ENCODE measurements at regions of chr6 and their contacts with region 1.

Region 1: GRCh38 chr6:14210663-14211561 is 93.3 kb downstream of the CD83 start:
- DNase-seq: peak; percentile 98
- CTCF ChIP-seq: peak; percentile 98

Region 2: DNA sequence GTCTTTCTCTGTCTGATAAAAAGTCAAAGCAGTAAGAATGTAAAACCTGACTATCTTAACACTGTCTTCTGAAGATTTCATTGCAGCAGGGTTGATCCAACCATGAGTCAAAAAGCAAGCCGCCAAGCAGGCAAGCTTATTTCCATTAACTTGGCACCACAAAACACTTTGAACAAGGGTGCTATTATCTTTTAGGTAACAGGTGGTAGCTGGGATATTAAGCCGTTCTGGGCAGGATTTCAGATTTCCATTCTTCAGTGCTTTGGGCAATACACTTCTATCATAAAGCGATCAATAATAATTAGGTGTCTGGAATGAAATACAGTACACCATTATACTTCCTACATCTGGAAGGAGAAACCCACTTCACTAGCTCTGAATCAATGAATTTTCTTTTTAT is 1064.5 kb before region 1 on chr6:
- in situ Hi-C with region 1: no loop called
- DNase-seq: no peak
- CTCF ChIP-seq: no peak

Region 3: DNA sequence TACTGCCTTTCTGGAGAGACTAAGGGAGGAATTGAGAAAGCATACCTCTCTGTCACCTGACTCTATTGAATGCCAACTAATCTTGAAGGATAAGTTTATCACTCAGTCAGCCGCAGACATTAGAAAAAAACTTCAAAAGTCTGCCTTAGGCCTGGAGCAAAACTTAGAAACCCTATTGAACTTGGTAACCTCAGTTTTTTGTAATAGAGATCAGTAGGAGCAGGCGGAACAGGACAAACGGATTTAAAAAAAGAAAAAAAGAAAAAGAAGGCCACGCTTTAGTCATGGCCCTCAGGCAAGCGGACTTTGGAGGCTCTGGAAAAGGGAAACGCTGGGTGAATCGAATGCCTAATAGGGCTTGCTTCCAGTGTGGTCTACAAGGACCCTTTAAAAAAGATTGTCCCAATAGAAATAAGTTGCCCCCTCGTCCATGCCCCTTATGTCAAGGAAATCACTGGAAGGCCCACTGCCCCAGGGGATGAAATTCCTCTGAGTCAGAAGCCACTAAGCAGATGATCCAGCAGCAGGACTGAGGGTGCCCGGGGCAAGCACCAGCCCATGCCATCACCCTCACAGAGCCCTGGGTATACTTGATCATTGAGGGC is 329.2 kb before region 1 on chr6:
- in situ Hi-C with region 1: no loop called
- DNase-seq: no peak
- CTCF ChIP-seq: no peak

Region 4: GRCh38 chr6:15389765-15390723 is 1179.1 kb after region 1 on chr6:
- in situ Hi-C with region 1: loop called (anchors 25 kb)
- DNase-seq: peak; percentile 59
- CTCF ChIP-seq: peak; percentile 51

Region 5: DNA sequence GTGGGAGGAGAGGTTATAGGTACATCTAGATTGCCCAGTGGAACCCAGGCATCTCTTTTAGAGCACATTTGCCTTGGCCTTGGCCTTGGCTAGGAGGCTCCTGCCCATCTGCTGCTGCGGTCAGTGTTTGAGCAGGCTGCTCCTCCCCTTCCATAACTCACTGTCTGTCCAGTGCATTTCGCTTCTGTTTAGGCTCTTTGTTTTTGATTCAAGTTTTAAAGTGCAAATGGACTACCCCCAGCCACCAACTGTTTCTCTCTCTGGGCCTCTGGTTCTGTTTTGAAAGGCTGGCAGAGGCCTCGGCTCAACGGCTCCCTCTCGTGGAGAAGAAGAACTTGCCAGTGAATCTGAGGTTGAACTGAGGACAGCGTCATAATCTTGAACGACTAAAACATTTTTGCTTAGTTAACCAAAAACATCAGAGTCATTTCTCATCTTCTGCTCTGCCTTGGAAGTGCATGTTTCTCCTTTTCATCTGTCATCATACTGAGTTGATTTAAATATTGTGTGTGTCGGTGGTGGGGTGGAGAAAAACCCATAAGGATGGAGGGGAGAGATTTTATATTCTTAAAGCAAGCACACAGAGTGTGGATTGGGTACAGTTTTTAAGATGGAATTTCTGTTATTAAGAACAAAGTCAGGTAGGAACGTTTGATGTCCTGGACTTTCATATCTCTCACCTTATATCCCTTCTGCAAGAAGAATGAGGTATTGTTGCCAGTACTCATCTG is 1280.5 kb after region 1 on chr6:
- in situ Hi-C with region 1: loop called (anchors 25 kb)
- DNase-seq: peak; percentile 74
- CTCF ChIP-seq: peak; percentile 76

Region 6: DNA sequence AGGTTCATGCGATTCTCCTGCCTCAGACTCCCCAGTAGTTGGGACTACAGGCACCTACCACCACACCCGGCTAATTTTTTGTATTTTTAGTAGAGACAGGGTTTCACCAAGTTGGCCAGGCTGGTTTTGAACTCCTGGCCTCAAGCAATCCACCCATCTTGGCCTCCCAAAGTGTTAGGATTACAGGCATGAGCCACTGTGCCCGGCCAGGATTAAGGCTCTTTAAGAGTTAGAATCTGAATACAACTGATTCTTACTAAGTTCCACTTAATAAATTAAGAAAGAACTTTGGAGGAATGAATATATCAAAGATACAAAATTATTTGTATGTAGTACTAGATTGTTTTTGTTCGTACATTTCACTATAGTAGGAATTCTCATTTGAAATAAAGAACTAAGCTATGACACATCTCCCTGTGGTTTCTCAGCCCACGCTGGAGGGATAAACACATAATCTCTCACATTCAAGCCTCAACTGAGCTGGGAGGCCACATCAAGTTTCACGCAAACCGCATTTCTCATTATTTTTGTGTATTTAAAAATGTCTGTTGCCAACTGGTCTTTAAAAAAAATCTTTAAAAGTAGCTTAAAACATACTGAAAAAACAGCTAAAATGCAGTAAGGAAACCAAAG is 1417.7 kb after region 1 on chr6:
- in situ Hi-C with region 1: loop called (anchors 25 kb)
- DNase-seq: no peak
- CTCF ChIP-seq: no peak